Ascending aorta (tissue), 2 donors: ENCODE measurements at regions of chr1 and their contacts with region 1.

Region 1: DNA sequence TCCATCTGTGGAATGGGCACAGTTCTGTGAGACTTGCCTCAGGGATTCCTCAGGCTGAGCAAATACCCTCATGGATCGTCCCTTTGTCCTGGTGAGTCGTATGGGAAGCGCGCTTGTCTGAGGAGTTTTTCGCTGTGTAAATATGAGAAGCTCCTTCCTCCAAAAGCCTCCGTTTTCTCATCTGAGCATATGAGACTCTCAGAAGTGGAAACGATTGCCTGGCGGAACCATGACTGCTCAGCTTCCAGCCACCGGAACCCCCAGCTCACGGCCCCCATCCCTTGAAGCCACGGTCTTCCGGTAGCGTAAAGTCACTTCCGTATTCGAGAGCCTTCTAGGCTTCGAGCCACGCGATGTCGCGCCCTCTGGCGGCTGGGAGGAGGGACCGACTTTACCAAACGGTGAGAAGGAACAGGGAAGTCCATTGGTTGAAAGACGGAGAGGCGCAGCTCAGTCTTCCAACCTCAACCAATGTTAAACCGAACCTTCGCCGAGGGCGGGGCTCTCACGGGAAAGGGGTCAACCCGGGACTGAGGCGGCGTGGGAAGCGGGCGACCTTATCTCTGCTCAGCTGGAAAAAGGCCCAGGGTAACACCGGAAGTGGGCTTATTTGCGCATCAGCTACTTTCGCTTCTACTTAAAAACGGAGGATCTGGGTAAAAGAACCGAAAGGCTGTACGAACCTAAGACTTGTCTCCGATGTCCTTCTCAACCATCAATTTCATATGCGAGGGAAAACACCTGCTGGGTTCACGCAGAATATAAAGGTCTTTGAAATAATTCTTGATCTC is 46.2 kb downstream of the AZIN2 start:
- DNase-seq: peak; percentile 97 to 100
- H3K4me3 ChIP-seq: peak overlapping the region; percentile 63 to 79
- H3K27ac ChIP-seq: peak overlapping the region; percentile 86 to 88
- H3K4me1 ChIP-seq: peaks cover 7 to 15% of the 10 kb centered on the region in 2 donors
- H3K27me3 ChIP-seq: no peaks in the 10 kb centered on the region
- CTCF ChIP-seq: peak; percentile 85 to 89 (median 87)

Region 2: DNA sequence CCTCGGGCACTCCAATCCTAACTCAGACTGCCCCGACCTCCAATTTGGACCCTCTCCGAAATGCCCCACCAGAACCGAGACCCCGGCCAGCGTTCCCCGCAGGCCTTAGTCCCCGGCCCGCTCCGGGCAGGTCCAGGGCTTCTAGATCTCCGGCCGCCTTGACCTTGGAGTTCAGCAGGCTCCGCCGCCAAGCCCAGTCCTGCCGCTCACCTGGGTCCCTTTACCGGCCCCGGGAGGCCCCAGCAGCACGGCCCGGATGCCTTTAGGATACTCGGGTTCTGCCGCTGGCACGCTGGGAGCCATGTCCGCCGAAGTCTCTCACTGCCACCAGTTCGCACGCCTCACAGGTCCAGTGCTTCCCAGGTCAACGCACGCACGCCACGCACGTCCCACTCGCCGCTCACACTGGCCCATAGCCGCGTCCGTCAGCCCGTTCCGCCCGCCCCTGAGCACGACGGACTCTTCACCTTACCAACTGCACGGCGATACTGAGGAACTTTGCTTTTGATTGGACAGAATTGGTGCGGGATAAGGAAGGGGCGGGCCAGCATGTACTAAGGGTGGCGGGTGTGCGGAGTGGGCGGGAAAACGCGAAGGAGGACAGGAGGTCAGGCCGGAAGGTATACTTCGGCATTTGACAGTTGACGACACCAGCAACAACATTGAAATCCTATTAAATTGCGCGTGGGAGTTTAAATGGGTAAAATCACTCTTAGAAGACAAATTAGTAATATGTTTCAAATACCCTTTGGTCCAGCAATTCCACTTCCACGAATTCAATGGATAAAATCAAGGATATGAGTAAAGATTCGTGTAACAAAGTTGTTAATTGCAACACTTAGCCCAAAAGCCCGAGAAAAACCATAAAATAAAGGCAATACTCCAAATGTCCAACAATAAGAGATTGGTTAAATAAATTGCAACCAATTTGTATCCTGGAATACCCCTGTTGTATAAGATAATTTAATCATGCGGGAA is 90.4 kb before region 1 on chr1 and contains the start of gene AK2:
- intact Hi-C with region 1: loop called (anchors 1 kb)
- DNase-seq: peak; percentile 90 to 98
- H3K4me3 ChIP-seq: peak within 1 kb of the TSS; percentile 79 to 93
- H3K27ac ChIP-seq: peak within 1 kb of the TSS; percentile 65 to 68
- H3K4me1 ChIP-seq: peaks cover 0 to 18% of the 10 kb centered on the region in 2 donors
- H3K27me3 ChIP-seq: no peaks in the 10 kb centered on the region
- CTCF ChIP-seq: no peak
- total RNA-seq, gene AK2: 68.4 TPM

Region 3: GRCh38 chr1:33094971-33095604 is 32.1 kb before region 1 on chr1:
- intact Hi-C with region 1: loop called (anchors 2 kb)
- DNase-seq: peak in 1 of 2 donors; percentile 81
- H3K4me3 ChIP-seq: no peak overlapping the region
- H3K27ac ChIP-seq: no peak overlapping the region
- H3K4me1 ChIP-seq: no peaks in the 10 kb centered on the region
- H3K27me3 ChIP-seq: no peaks in the 10 kb centered on the region
- CTCF ChIP-seq: peak; percentile 70 to 99 (median 96)

Region 4: DNA sequence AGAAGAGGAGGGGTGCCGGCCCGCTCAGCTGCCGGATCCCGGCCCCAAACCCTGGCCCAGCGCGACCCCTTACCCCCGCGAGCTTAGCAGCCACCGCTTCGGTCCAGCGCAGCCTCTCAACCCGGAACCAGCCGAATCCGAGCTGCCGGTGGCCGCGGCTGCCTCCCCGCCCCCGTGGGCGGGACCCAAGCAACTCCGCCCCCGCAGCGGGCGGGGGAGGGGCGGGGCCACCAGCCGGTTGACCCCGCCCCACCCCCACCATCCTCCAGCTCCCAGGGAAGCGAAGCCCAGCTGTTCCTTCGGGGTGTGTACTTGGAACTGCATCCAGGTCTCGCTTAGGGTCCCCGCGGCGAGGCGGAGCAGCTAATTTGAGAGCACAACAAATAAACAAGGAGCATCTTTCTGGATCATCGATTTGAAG is 54.7 kb after region 1 on chr1 and contains the start of gene TRIM62:
- intact Hi-C with region 1: loop called (anchors 1 kb)
- DNase-seq: peak; percentile 27 to 92
- H3K4me3 ChIP-seq: peak within 1 kb of the TSS; percentile 79 to 87
- H3K27ac ChIP-seq: peak within 1 kb of the TSS; percentile 82 to 92
- H3K4me1 ChIP-seq: peaks cover 0 to 12% of the 10 kb centered on the region in 2 donors
- H3K27me3 ChIP-seq: no peaks in the 10 kb centered on the region
- CTCF ChIP-seq: no peak
- total RNA-seq, gene TRIM62: 18.1 TPM

Region 5: DNA sequence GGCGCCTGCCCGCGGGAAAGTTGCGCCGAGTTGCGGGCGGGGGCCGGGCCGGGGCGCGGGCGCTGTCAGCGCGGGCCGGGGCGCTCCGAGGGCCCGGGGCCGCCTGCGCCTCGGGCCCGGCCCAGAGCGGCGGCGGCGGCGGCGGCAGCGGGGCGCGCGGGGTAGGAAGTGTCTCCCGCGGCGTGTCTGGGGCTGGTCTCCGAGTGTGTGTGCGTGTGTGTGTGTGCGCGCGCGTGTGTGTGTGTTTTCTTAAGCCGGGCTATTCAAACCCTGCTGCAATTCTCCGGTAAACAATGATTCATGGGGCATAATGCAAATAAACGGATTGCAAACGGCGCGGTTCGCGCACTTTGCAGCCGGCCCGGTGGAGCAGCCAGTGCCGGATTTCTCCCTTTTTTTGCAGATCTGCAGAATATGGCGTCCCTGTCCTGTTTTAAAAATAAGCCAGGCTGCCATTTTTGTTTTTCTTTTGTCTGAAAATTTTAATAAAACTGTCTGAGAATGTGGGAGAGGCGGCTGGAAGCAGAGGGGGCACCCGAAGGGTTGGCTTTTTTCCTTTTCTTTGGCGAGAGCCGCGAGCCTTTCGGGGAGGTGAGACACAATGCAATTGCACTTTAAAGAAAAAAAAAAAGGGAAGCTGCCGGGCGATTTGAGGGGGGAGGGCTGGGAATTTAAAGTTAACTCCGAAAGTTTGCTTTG is 129.7 kb after region 1 on chr1:
- intact Hi-C with region 1: loop called (anchors 2 kb)
- DNase-seq: peak in 1 of 2 donors; percentile 76
- H3K4me3 ChIP-seq: peak overlapping the region; percentile 74 to 82
- H3K27ac ChIP-seq: peak overlapping the region; percentile 95 to 97
- H3K4me1 ChIP-seq: peaks cover 19 to 45% of the 10 kb centered on the region in 2 donors
- H3K27me3 ChIP-seq: no peaks in the 10 kb centered on the region
- CTCF ChIP-seq: no peak